ENCODE measurements at regions of chr16 and their contacts with region 1.

Region 1: DNA sequence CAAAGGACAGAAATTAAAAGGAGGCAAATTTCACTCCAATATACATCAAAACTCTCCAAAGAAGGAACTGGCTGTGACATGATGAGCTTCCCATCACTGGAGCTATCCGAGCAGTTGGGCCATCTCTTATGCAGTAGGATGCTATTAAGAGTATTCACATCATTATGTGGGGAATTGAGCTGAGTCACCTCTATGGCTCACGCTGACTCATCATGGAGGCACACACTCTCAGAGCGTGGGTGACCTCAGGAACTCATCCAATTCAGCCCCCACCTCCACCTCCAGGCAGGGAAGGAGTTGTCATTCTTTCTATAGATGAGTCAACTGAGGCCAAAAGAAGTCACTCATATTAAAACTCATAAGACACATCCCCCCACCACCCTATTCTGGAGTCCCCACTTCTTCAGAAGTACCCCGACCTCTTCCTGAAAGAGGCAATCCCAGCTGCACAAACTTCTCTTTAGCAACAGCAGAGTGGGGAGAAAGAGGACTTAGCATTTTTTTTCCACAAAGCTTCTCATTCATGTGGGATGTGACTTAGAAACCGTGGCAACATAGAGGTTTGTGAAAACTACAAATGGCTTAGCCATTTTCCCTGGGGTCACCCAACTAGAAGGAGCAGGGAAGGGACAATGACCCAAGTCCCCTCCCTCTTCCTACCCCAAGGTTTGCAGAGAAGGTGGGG is 32.5 kb downstream of the ABCC12 start:
- DNase-seq: peak; percentile 98
- H3K4me3 ChIP-seq: no peak overlapping the region
- CTCF ChIP-seq: no peak

Region 2: DNA sequence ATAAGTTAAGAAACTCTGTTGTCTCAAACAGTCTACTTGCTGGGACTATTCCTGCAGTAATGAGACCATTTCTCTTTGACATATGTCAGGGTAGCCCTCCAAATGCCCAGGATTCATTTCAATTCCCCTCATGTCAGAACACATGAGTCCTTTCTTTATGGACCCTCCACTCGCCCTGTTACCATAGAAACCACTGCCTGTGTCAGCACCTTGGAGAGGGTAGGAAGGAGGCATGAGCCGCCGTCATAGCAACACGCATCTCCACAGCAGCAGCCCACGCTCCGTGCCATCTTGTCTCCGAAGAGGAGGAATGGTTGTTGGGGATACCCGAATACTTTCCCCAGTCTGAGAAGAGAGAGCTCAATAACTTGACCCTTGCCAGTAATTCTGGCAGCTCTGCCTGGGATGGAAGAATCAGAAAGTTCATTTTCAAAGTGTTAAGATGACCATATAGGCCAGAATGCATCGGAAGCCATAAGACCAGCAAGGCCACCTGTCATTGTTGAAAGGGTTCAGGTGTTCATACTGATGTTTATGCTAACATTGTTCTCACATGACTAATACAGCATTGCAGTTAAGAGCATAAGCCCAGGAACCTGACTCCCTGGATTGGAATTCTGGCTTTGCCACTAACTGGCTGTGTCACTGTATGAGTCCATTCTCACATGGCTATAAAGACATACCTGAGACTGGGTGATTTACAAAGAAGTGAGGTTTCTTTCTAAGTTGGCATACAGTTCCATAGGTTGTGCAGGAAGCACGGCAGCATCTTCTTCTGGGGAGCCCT is 108.7 kb before region 1 on chr16:
- CTCF ChIA-PET with region 1: no interaction called
- POLR2A ChIA-PET with region 1: no interaction called
- DNase-seq: no peak
- H3K4me3 ChIP-seq: no peak overlapping the region
- CTCF ChIP-seq: no peak

Region 3: GRCh38 chr16:48109475-48109874 is 13.8 kb before region 1 on chr16:
- CTCF ChIA-PET with region 1: interaction called, 11 read pairs
- POLR2A ChIA-PET with region 1: interaction called, 4 read pairs
- DNase-seq: no peak
- H3K4me3 ChIP-seq: no peak overlapping the region
- CTCF ChIP-seq: no peak